ENCODE measurements at regions of chr3 and their contacts with region 1.

Region 1: DNA sequence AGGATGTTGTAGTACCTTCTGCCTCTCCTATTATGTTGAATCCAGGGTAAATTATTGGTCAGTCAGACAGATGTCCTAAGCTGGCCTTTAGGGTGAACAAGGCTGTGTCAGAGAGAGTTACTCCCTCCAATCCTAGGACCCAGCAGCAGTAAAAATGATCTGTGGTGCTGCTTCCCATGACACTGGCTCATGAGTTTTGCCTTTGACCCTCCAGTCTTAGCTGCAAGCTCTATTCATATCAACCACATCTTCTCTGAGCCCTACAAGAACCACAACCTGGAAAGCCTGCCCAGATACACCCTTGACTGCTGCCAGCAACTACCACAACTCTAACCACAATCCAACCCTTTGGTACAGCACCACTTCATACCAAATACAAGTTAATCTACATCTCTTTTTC is 27.2 kb upstream of the PHLDB2 start:
- DNase-seq: peak in 7 of 35 experiments; percentile 3 to 37 (median 5)
- ATAC-seq: peak in 3 of 4 experiments; percentile 45 to 80 (median 71)
- H3K4me3 ChIP-seq: no peak overlapping the region
- H3K4me3 Mint-ChIP-seq: no peak overlapping the region
- H3K27ac ChIP-seq: no peak overlapping the region
- H3K27ac Mint-ChIP-seq: no peak overlapping the region
- H3K4me1 ChIP-seq: peaks cover 2 to 3% of the 10 kb centered on the region in 2 experiments
- H3K4me1 Mint-ChIP-seq: peaks cover 9 to 13% (median 11%) of the 10 kb centered on the region in 3 donors
- H3K27me3 ChIP-seq: no peaks in the 10 kb centered on the region
- H3K27me3 Mint-ChIP-seq: no peaks in the 10 kb centered on the region

Region 2: DNA sequence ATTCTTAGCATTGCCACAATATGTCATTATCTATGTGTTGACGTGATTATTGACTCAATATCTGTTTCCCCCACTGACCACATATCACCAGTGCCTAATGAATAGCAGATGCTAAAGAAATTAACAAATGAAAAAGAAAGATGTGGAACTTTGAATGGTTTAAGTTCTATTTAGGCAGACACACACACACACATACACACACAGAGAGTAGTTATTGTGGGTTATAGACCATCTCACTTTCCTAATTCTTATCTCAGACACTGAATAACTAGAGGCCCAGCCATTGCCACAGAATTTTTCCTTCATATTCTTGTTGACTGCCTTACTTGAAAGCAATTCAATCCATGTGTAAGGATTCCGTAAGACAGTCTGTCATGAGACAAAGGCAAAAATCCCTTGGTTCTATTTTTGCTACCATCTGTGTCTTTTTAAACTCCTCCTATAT is 34.6 kb before region 1 on chr3:
- CTCF ChIA-PET with region 1: interaction called in 1 of 2 experiments, 14 read pairs
- POLR2A ChIA-PET with region 1: no interaction called
- DNase-seq: no peak
- ATAC-seq: no peak
- H3K4me3 ChIP-seq: no peak overlapping the region
- H3K4me3 Mint-ChIP-seq: no peak overlapping the region
- H3K27ac ChIP-seq: no peak overlapping the region
- H3K27ac Mint-ChIP-seq: no peak overlapping the region
- H3K4me1 ChIP-seq: no peaks in the 10 kb centered on the region
- H3K4me1 Mint-ChIP-seq: no peaks in the 10 kb centered on the region
- H3K27me3 ChIP-seq: no peaks in the 10 kb centered on the region
- H3K27me3 Mint-ChIP-seq: no peaks in the 10 kb centered on the region

Region 3: GRCh38 chr3:111904376-111905241 is 72.8 kb after region 1 on chr3:
- CTCF ChIA-PET with region 1: interaction called in 1 of 2 experiments, 10 read pairs
- POLR2A ChIA-PET with region 1: no interaction called
- DNase-seq: no peak
- ATAC-seq: no peak
- H3K4me3 ChIP-seq: no peak overlapping the region
- H3K4me3 Mint-ChIP-seq: no peak overlapping the region
- H3K27ac ChIP-seq: no peak overlapping the region
- H3K27ac Mint-ChIP-seq: no peak overlapping the region
- H3K4me1 ChIP-seq: no peaks in the 10 kb centered on the region
- H3K4me1 Mint-ChIP-seq: no peaks in the 10 kb centered on the region
- H3K27me3 ChIP-seq: no peaks in the 10 kb centered on the region
- H3K27me3 Mint-ChIP-seq: peaks cover 0 to 2% of the 10 kb centered on the region in 2 donors

Measured in T-cell (primary cell).